ENCODE measurements at regions of chr21 and their contacts with region 1.

Region 1: GRCh38 chr21:26170471-26171257 is at the start of gene APP:
- DNase-seq: peak; percentile 90
- H3K4me3 ChIP-seq: peak within 1 kb of the TSS; percentile 91
- H3K27ac ChIP-seq: peak within 1 kb of the TSS; percentile 90
- H3K4me1 ChIP-seq: peaks cover 32% of the 10 kb centered on the region
- H3K27me3 ChIP-seq: no peaks in the 10 kb centered on the region
- CTCF ChIP-seq: peak; percentile 69
- total RNA-seq, gene APP: 531 and 539 TPM in 2 replicates

Region 2: DNA sequence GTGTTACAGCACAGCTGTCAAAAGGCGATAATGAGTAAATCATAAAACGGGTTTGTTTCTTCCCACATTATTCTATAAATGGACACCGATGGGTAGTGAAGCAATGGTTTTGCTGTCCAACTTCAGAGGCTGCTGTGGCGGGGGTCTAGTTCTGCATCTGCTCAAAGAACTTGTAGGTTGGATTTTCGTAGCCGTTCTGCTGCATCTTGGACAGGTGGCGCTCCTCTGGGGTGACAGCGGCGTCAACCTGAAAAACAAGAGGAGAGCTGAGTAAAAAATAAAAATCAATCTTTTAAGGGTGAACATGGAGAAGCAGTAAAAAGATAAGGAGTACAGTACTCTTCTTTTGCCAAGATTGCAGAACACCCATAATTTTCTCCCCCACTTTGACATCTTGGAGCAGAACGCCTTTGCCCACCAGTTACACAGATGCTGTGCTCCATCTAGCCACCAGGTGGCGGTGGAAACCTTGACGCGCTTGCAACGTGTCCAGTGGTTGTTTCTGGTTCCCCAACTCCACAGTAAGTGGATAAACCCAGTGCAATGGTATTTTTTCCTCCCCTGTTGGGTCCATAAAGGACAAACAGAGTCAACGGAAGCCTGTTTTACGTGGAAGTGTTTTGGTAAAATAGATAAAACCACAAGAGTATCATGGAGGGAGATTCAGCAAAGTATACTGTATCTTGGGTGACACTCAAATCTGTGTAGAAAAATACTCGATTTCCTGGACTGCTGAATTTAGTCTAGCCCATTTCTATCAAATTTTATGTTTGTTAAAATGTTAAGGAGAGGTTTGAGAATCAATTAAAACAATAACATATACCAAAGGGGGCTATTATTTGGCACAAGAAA is 288.9 kb before region 1 on chr21:
- CTCF ChIA-PET with region 1: no interaction called
- POLR2A ChIA-PET with region 1: no interaction called
- intact Hi-C with region 1: loop called (anchors 5 kb)
- DNase-seq: peak; percentile 78
- H3K4me3 ChIP-seq: no peak overlapping the region
- H3K27ac ChIP-seq: peak overlapping the region; percentile 31
- H3K4me1 ChIP-seq: peaks cover 6% of the 10 kb centered on the region
- H3K27me3 ChIP-seq: no peaks in the 10 kb centered on the region
- CTCF ChIP-seq: peak; percentile 96

Region 3: DNA sequence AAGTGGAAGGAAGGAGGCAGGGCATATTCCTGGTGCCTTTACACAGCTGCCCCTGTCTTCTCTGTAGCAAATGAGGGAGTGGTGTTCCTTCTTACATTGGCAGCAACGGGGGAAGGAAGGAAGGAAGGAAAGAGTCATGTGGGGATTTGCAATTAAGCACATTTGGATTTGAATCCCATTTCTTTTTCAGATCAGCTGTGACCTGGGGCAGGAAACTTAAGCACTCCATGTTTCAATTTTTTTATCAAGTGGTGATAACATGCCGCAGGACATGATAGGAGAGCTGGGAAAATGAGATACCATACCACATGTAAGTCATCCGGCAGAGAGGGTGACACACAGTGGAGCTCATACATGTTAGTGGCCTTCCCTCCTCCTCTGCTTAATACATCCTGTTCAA is 186.9 kb before region 1 on chr21:
- CTCF ChIA-PET with region 1: no interaction called
- POLR2A ChIA-PET with region 1: no interaction called
- intact Hi-C with region 1: loop called (anchors 10 kb)
- DNase-seq: peak; percentile 94
- H3K4me3 ChIP-seq: peak overlapping the region; percentile 18
- H3K27ac ChIP-seq: peak overlapping the region; percentile 69
- H3K4me1 ChIP-seq: peaks cover 50% of the 10 kb centered on the region
- H3K27me3 ChIP-seq: no peaks in the 10 kb centered on the region
- CTCF ChIP-seq: no peak

Region 4: DNA sequence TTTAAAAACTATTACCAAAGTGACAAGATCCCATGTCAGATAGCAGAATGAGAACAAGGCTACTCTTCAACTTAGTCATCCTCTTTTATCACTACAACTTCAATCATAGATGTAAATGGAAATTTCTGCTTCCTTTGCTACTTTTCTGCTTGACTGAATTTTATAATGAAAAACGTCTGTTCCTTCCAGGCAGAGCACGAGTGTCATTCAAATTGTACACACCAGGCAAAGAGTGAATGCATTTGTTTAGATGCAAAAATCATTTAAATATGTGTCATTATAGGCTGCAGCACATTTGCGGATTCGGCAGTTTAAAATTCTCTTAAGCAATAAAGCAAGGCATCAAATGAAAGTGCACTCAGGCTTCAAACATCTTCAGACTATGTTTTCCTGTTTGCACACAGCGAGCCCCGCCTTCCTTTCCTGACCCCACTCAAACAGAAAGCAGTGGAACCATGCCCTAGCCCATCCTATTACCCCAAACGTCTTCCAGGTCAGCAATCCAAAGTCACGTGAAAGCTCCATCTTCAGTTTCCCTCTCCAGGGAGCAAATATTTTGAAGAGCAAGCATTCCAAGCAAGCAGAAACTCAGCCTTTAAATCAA is 99.7 kb before region 1 on chr21:
- CTCF ChIA-PET with region 1: no interaction called
- POLR2A ChIA-PET with region 1: interaction called, 3 read pairs
- intact Hi-C with region 1: loop called (anchors 10 kb)
- DNase-seq: peak; percentile 90
- H3K4me3 ChIP-seq: peak overlapping the region; percentile 29
- H3K27ac ChIP-seq: peak overlapping the region; percentile 52
- H3K4me1 ChIP-seq: peaks cover 75% of the 10 kb centered on the region
- H3K27me3 ChIP-seq: no peaks in the 10 kb centered on the region
- CTCF ChIP-seq: no peak

Region 5: GRCh38 chr21:26715878-26716506 is 545.3 kb after region 1 on chr21:
- CTCF ChIA-PET with region 1: no interaction called
- POLR2A ChIA-PET with region 1: no interaction called
- intact Hi-C with region 1: loop called (anchors 5 kb)
- DNase-seq: peak; percentile 73
- H3K4me3 ChIP-seq: no peak overlapping the region
- H3K27ac ChIP-seq: no peak overlapping the region
- H3K4me1 ChIP-seq: peaks cover 13% of the 10 kb centered on the region
- H3K27me3 ChIP-seq: no peaks in the 10 kb centered on the region
- CTCF ChIP-seq: peak; percentile 88